ENCODE measurements at regions of chr6 and their contacts with region 1.

Region 1: DNA sequence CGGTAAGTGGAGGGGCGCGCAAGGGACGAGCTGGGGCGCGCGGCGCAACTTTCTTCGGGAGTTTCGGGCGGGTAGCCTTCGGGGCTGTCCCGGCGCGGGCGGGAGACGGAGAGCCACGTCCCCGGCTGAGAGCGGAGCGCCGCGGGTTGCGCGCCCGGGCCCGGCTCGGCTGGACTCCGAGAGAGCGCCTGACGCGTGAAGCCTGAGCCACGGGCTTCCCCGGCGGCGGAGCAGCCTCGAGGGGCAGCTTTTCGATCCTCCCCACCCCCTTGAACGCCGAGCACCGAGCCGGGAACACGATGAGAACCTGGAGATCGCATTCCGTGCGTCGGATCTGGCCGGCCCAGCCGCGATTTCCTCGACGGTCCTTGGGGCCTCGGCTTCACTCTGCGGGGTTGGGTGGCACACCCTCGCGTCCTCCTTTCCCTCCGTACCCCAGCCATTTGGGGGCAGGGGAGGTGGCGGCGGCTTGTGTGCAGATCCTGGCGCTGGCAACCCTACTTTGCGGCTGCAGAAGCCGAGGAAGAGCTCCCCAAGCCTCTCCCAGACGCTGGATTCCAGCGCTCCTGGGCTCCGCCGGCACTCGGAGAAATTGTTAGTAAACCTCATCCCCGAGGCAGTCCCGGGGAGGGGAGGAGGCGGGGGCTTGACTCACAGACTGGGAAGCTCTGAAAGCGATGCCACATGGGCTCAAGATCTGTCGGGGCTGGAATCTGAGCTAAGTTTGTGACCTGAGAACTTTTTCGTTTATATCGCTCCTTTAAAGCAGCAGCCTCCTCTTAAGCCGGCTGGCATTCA is 572 bp downstream of the DSE start:
- DNase-seq: no peak
- ATAC-seq: no peak; the same call in 1 of the 3 replicates
- H3K4me3 ChIP-seq: peak overlapping the region; percentile 33
- H3K27ac ChIP-seq: no peak overlapping the region
- H3K4me1 ChIP-seq: peaks cover 0 to 14% of the 10 kb centered on the region in 2 experiments; a peak in 2 of 5 replicates
- H3K27me3 ChIP-seq: peaks cover 18 to 28% of the 10 kb centered on the region in 2 experiments; a peak in 4 of 5 replicates
- CTCF ChIP-seq: no peak
- EP300 ChIP-seq: no peak
- POLR2A ChIP-seq: no peak
- RAD21 ChIP-seq: no peak

Region 2: DNA sequence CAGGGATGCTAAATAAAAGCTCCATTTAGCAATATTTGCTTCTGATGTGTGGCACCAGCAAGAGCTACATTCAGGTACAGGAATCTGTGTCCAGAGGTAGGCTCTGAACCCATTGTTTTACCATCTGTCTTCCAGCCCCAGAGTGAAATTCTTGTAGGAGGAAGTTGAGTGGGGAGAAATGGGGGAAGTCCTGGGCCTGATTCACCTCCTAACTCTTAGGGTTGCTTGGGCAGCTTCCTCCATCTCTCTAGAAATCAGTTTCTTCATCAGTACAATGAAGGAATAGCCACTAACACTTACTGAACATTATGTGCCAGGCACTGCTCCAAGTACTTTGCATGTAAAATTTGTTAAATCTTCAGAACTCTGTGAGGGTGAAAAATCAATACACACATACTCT is 56.4 kb before region 1 on chr6:
- CTCF ChIA-PET with region 1: no interaction called
- POLR2A ChIA-PET with region 1: no interaction called
- in situ Hi-C with region 1: loop called (anchors 5 kb)
- intact Hi-C with region 1: no loop called
- DNase-seq: no peak
- ATAC-seq: no peak
- H3K4me3 ChIP-seq: no peak overlapping the region
- H3K27ac ChIP-seq: no peak overlapping the region
- H3K4me1 ChIP-seq: no peaks in the 10 kb centered on the region
- H3K27me3 ChIP-seq: peaks cover 0 to 2% of the 10 kb centered on the region in 2 experiments; a peak in 1 of 5 replicates
- CTCF ChIP-seq: no peak
- EP300 ChIP-seq: no peak
- POLR2A ChIP-seq: no peak
- RAD21 ChIP-seq: no peak

Measured in K562 (cell line).